ENCODE measurements at regions of chr3 and their contacts with region 1.

Region 1: GRCh38 chr3:126522363-126522788 is 1.6 kb upstream of the CHST13 start:
- DNase-seq: peak; percentile 62 to 84
- ATAC-seq: no peak
- H3K4me3 ChIP-seq: no peak overlapping the region
- H3K27ac ChIP-seq: no peak overlapping the region
- H3K4me1 ChIP-seq: no peaks in the 10 kb centered on the region
- H3K27me3 ChIP-seq: no peaks in the 10 kb centered on the region

Region 2: GRCh38 chr3:125168711-125169393 is 1353.5 kb before region 1 on chr3:
- intact Hi-C with region 1: no loop called
- DNase-seq: no peak
- ATAC-seq: no peak
- H3K4me3 ChIP-seq: no peak overlapping the region
- H3K27ac ChIP-seq: no peak overlapping the region
- H3K4me1 ChIP-seq: no peaks in the 10 kb centered on the region
- H3K27me3 ChIP-seq: no peaks in the 10 kb centered on the region

Region 3: GRCh38 chr3:126156477-126156876 is 365.9 kb before region 1 on chr3:
- intact Hi-C with region 1: no loop called
- DNase-seq: no peak
- ATAC-seq: no peak
- H3K4me3 ChIP-seq: no peak overlapping the region
- H3K27ac ChIP-seq: no peak overlapping the region
- H3K4me1 ChIP-seq: no peaks in the 10 kb centered on the region
- H3K27me3 ChIP-seq: no peaks in the 10 kb centered on the region

Region 4: GRCh38 chr3:126464494-126464893 is 57.9 kb before region 1 on chr3:
- intact Hi-C with region 1: no loop called
- DNase-seq: peak in 1 of 2 donors; percentile 33
- ATAC-seq: no peak
- H3K4me3 ChIP-seq: no peak overlapping the region
- H3K27ac ChIP-seq: no peak overlapping the region
- H3K4me1 ChIP-seq: no peaks in the 10 kb centered on the region
- H3K27me3 ChIP-seq: no peaks in the 10 kb centered on the region

Region 5: GRCh38 chr3:127455541-127456450 is 933.4 kb after region 1 on chr3:
- intact Hi-C with region 1: loop called in 1 of 2 experiments (anchors 5 kb)
- DNase-seq: peak; percentile 73 to 92
- ATAC-seq: peak; percentile 89
- H3K4me3 ChIP-seq: no peak overlapping the region
- H3K27ac ChIP-seq: no peak overlapping the region
- H3K4me1 ChIP-seq: no peaks in the 10 kb centered on the region
- H3K27me3 ChIP-seq: no peaks in the 10 kb centered on the region